ENCODE measurements at regions of chr6 and their contacts with region 1.

Region 1: DNA sequence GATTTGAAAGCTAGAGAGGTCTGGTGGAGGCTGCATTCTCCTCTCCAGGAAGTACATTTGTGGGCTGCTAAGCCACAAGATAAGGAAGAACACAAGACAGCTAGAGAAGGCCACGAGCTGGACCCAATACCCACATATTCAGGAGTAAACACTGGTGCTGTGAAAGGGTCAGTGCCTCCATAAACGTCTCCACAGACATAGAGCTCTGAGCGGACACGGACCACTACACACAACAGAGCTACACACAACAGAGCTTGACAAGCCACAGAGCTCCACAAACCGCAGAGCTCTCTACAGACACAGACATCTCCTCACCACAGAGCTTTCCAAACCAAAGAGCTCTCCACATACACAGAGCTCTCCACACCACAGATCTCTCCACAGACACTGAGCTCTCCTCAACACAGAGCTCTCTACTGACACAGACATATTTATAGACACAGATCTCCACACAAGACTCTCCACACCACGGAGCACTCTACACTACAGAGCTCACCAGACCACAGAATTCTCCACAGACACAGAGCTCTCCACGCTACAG is 51.9 kb downstream of the ERMARD start:
- DNase-seq: no peak
- ATAC-seq: no peak
- H3K4me3 ChIP-seq: no peak overlapping the region
- H3K27ac ChIP-seq: 0 out of 2 replicates have a peak overlapping the region, but pooled peaks have one; percentile 20
- H3K4me1 ChIP-seq: peaks cover 33% of the 10 kb centered on the region
- H3K27me3 ChIP-seq: no peaks in the 10 kb centered on the region; the same call in 1 of the 2 replicates
- CTCF ChIP-seq: no peak

Region 2: DNA sequence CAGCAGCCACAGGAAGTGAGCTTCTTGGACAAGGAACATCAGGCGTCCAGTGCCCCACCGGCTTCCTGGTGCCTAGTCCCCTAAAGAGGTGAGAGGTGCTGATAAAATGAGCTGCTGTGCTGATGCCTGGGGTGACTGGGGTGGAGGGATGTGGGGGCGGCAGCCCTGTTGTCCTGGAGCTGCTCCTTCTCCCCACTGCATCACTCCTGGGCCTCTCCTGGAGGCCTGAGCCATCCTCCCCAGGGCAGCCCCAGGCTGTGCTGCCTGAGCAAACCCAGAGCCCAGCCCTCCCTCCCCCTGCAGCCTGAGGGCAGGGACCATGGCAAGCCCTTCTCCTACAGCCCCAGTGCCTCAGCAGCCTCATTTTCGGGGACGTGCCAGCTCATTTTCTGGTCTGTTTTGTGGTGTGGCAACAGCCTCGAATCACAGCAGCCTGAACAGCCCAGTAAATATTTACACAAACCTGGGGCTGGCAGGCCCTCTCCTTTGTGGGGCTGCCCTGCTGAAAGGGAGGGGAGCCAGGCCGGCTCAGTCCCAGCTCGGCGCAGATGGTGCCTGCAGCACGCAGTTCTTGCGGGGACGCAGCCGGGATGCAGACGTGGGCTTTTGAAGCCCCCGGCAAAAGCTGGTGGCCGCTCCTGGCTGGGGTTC is 227.6 kb after region 1 on chr6:
- CTCF ChIA-PET with region 1: no interaction called
- POLR2A ChIA-PET with region 1: no interaction called
- in situ Hi-C with region 1: no loop called
- intact Hi-C with region 1: no loop called
- DNase-seq: no peak
- ATAC-seq: no peak
- H3K4me3 ChIP-seq: no peak overlapping the region
- H3K27ac ChIP-seq: no peak overlapping the region
- H3K4me1 ChIP-seq: no peaks in the 10 kb centered on the region
- H3K27me3 ChIP-seq: no peaks in the 10 kb centered on the region
- CTCF ChIP-seq: no peak

Region 3: GRCh38 chr6:170186959-170187668 is 383.8 kb after region 1 on chr6:
- CTCF ChIA-PET with region 1: no interaction called
- POLR2A ChIA-PET with region 1: interaction called, 11 read pairs
- in situ Hi-C with region 1: no loop called
- intact Hi-C with region 1: no loop called
- DNase-seq: no peak
- ATAC-seq: no peak; the same call in 1 of the 2 replicates
- H3K4me3 ChIP-seq: no peak overlapping the region
- H3K27ac ChIP-seq: no peak overlapping the region
- H3K4me1 ChIP-seq: no peaks in the 10 kb centered on the region
- H3K27me3 ChIP-seq: no peaks in the 10 kb centered on the region
- CTCF ChIP-seq: no peak